Body of pancreas (tissue), 4 donors: ENCODE measurements at regions of chr10 and their contacts with region 1.

Region 1: GRCh38 chr10:77165445-77166208 is 472.0 kb downstream of the KCNMA1 start:
- DNase-seq: peak; percentile 53 to 61 (median 54)
- ATAC-seq: peak; percentile 82
- H3K4me3 ChIP-seq: no peak overlapping the region
- H3K27ac ChIP-seq: peak overlapping the region in 1 of 4 donors; percentile 35
- H3K4me1 ChIP-seq: peaks cover 12% of the 10 kb centered on the region
- H3K27me3 ChIP-seq: no peaks in the 10 kb centered on the region
- CTCF ChIP-seq: peak; percentile 46 to 86 (median 78)
- POLR2A ChIP-seq: no peak

Region 2: GRCh38 chr10:77494327-77494726 is 328.7 kb after region 1 on chr10:
- intact Hi-C with region 1: loop called (anchors 10 kb)
- DNase-seq: no peak
- ATAC-seq: no peak
- H3K4me3 ChIP-seq: no peak overlapping the region
- H3K27ac ChIP-seq: no peak overlapping the region
- H3K4me1 ChIP-seq: peaks cover 52% of the 10 kb centered on the region
- H3K27me3 ChIP-seq: no peaks in the 10 kb centered on the region
- CTCF ChIP-seq: no peak
- POLR2A ChIP-seq: no peak

Region 3: GRCh38 chr10:77710759-77711682 is 545.4 kb after region 1 on chr10:
- intact Hi-C with region 1: loop called (anchors 10 kb)
- DNase-seq: peak; percentile 75 to 87 (median 82)
- ATAC-seq: peak; percentile 95
- H3K4me3 ChIP-seq: no peak overlapping the region
- H3K27ac ChIP-seq: no peak overlapping the region
- H3K4me1 ChIP-seq: peaks cover 9% of the 10 kb centered on the region
- H3K27me3 ChIP-seq: no peaks in the 10 kb centered on the region
- CTCF ChIP-seq: peak; percentile 91 to 97 (median 95)
- POLR2A ChIP-seq: no peak